ENCODE measurements at regions of chr12 and their contacts with region 1.

Region 1: GRCh38 chr12:116277393-116278278 is at the start of gene MED13L:
- DNase-seq: peak; percentile 93
- ATAC-seq: peak; percentile 90
- total RNA-seq, gene MED13L: 193 TPM

Region 2: GRCh38 chr12:116426391-116427136 is 148.9 kb after region 1 on chr12:
- intact Hi-C with region 1: loop called (anchors 10 kb)
- DNase-seq: peak; percentile 75
- ATAC-seq: peak; percentile 92

Region 3: GRCh38 chr12:116599285-116600136 is 321.9 kb after region 1 on chr12:
- intact Hi-C with region 1: loop called (anchors 10 kb)
- DNase-seq: peak; percentile 90
- ATAC-seq: peak; percentile 89

Measured in sciatic nerve (tissue), 2 donors.